Activated CD8-positive, alpha-beta memory T cell treated with anti-CD3 and anti-CD28 coated beads, Interleukin-2, amount 10 ng/mL, durations not matched to agents 7 days and 5 days (primary cell): ENCODE measurements at regions of chr10 and their contacts with region 1.

Region 1: GRCh38 chr10:48363617-48364355 is 57.3 kb downstream of the MAPK8 start:
- DNase-seq: peak; percentile 53
- ATAC-seq: peak; percentile 60
- H3K4me3 Mint-ChIP-seq: no peak overlapping the region
- H3K27ac Mint-ChIP-seq: no peak overlapping the region
- H3K4me1 Mint-ChIP-seq: peaks cover 9% of the 10 kb centered on the region
- H3K27me3 Mint-ChIP-seq: no peaks in the 10 kb centered on the region

Region 2: GRCh38 chr10:48324580-48324979 is 39.2 kb before region 1 on chr10:
- CTCF ChIA-PET with region 1: no interaction called
- DNase-seq: no peak
- ATAC-seq: peak; percentile 30
- H3K4me3 Mint-ChIP-seq: no peak overlapping the region
- H3K27ac Mint-ChIP-seq: no peak overlapping the region
- H3K4me1 Mint-ChIP-seq: peaks cover 17% of the 10 kb centered on the region
- H3K27me3 Mint-ChIP-seq: no peaks in the 10 kb centered on the region

Region 3: DNA sequence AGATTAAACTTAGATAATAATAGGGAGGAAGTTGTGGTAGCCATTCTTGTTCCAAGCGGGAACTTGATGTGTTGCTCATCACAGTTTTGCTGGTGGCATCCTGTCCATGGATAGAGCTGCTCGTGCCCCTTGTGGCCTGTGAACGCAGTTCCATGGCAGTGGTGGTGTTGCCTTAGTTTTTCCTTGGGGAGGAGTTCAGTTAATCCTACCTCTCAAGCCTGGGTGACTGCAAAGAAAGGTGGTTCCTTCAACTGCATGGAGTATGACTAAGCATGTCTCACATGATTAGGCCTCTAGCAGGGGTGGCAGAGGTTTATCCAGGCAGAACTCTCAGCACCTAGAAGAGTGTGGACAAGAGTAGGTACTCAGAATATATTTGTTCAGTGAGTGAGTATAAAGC is 42.4 kb after region 1 on chr10:
- CTCF ChIA-PET with region 1: no interaction called
- DNase-seq: no peak
- ATAC-seq: no peak
- H3K4me3 Mint-ChIP-seq: no peak overlapping the region
- H3K27ac Mint-ChIP-seq: no peak overlapping the region
- H3K4me1 Mint-ChIP-seq: no peaks in the 10 kb centered on the region
- H3K27me3 Mint-ChIP-seq: no peaks in the 10 kb centered on the region

Region 4: DNA sequence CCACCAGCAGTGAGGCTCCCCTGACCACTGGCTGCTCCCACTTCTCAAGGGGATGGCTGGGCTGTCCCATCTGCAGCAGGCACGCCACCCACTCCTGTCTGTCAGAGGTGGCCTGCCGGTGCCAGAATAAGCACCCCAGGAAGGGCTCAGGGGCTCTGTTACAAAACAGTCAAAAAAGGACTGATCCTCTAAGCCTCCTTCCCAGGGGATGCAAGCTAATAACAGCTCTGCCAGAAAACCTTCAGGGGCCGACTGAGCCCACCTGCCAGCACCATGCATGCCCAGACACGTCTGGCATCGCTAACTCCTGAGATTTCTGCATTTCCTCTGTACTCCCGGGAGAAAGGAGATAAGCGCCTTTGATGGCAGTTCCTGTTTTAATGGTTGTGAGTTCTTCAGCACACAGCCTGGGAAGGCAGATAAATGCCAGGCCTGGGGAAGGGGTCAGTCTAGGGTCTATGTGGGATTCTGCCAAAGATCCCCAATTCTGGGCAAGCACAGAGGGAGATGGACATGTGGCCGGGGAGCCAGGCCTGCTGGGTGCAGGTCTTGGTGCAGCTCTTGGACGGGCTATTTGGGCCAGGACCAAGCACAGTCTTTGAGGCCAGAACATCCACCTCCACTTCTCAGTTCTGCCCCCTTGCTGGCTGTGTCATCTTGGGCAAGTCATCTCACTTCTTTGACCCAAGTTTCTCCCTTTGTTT is 112.6 kb after region 1 on chr10:
- CTCF ChIA-PET with region 1: no interaction called
- DNase-seq: peak; percentile 31
- ATAC-seq: no peak
- H3K4me3 Mint-ChIP-seq: no peak overlapping the region
- H3K27ac Mint-ChIP-seq: no peak overlapping the region
- H3K4me1 Mint-ChIP-seq: no peaks in the 10 kb centered on the region
- H3K27me3 Mint-ChIP-seq: peaks cover 46% of the 10 kb centered on the region

Region 5: GRCh38 chr10:48506147-48506917 is 142.5 kb after region 1 on chr10:
- CTCF ChIA-PET with region 1: interaction called, 14 read pairs
- DNase-seq: peak; percentile 50
- ATAC-seq: peak; percentile 47
- H3K4me3 Mint-ChIP-seq: no peak overlapping the region
- H3K27ac Mint-ChIP-seq: no peak overlapping the region
- H3K4me1 Mint-ChIP-seq: no peaks in the 10 kb centered on the region
- H3K27me3 Mint-ChIP-seq: peaks cover 9% of the 10 kb centered on the region